ENCODE measurements at regions of chr22 and their contacts with region 1.

Region 1: DNA sequence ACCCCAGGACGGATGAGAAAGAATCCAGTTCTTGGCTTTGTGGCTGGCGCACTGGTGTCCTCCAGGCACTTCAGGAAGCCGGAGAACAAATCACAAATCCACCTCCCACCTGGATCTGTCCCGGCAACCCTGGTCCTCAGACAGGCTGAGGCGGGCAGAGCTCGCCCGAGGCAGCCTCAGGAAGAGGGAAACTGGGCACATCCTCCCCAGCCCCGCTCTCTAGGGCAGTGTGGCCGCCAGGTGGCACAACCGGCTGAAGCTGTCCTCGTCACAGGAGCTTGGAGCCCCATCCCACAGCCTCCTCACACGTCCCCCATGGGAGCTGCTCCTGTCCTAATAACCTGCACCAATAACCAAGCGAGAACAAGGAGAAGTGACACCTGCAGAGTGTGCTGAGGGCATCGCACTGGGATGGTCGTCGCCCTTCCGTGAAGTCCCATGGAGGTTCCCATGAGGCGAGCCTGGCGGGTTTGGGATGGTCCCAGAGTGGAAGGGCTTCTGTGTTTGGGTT is 393.5 kb downstream of the BRD1 start:
- DNase-seq: peak; percentile 67
- ATAC-seq: peak; percentile 94
- H3K4me3 Mint-ChIP-seq: no peak overlapping the region
- H3K27ac Mint-ChIP-seq: no peak overlapping the region
- H3K4me1 Mint-ChIP-seq: no peaks in the 10 kb centered on the region
- H3K27me3 Mint-ChIP-seq: no peaks in the 10 kb centered on the region
- CTCF ChIP-seq: 0 out of 2 replicates have a peak, but pooled peaks have one; percentile 24

Region 2: DNA sequence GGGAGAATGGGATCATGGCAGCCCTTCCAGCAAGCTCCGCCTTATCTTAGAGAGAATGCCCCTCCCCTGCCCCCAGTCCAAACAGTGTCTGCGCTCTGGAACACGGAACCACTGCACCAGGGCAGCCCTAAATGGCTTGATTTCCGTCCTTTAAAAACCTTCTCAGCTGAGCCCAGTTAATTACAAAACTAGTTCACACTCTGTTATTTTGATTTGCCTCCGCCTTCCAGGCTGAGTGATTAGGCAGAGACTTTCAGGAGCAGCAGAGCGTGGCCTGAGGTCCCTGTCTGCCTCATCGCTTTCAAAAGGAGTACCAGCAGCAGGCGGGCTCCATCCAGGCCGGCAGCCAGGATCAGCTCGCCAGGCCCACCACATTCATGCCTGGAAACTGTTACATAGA is 80.5 kb after region 1 on chr22:
- CTCF ChIA-PET with region 1: interaction called, 12 read pairs
- POLR2A ChIA-PET with region 1: no interaction called
- DNase-seq: no peak
- ATAC-seq: no peak
- H3K4me3 Mint-ChIP-seq: no peak overlapping the region
- H3K27ac Mint-ChIP-seq: no peak overlapping the region
- H3K4me1 Mint-ChIP-seq: peaks cover 53% of the 10 kb centered on the region
- H3K27me3 Mint-ChIP-seq: peaks cover 6% of the 10 kb centered on the region
- CTCF ChIP-seq: no peak

Region 3: GRCh38 chr22:49548356-49549211 is 114.4 kb after region 1 on chr22:
- CTCF ChIA-PET with region 1: interaction called, 70 read pairs
- POLR2A ChIA-PET with region 1: interaction called, 3 read pairs
- DNase-seq: peak; percentile 69
- ATAC-seq: peak; percentile 86
- H3K4me3 Mint-ChIP-seq: no peak overlapping the region
- H3K27ac Mint-ChIP-seq: no peak overlapping the region
- H3K4me1 Mint-ChIP-seq: peaks cover 17% of the 10 kb centered on the region
- H3K27me3 Mint-ChIP-seq: peaks cover 12% of the 10 kb centered on the region
- CTCF ChIP-seq: 0 out of 2 replicates have a peak, but pooled peaks have one; percentile 25

Region 4: GRCh38 chr22:49632199-49633009 is 198.2 kb after region 1 on chr22:
- CTCF ChIA-PET with region 1: interaction called, 55 read pairs
- POLR2A ChIA-PET with region 1: no interaction called
- DNase-seq: peak; percentile 82
- ATAC-seq: peak; percentile 85
- H3K4me3 Mint-ChIP-seq: peak overlapping the region; percentile 59
- H3K27ac Mint-ChIP-seq: no peak overlapping the region
- H3K4me1 Mint-ChIP-seq: peaks cover 4% of the 10 kb centered on the region; the same call in 1 of the 2 replicates
- H3K27me3 Mint-ChIP-seq: no peaks in the 10 kb centered on the region; the same call in 1 of the 2 replicates
- CTCF ChIP-seq: peak; percentile 62; the same call in 1 of the 2 replicates